Activated CD8-positive, alpha-beta memory T cell treated with anti-CD3 and anti-CD28 coated beads, Interleukin-2, amount 10 ng/mL, durations not matched to agents 7 days and 5 days (primary cell): ENCODE measurements at regions of chr15 and their contacts with region 1.

Region 1: GRCh38 chr15:41811432-41812195 is 16.3 kb upstream of the JMJD7 start:
- DNase-seq: peak; percentile 83
- ATAC-seq: peak; percentile 91
- H3K4me3 Mint-ChIP-seq: no peak overlapping the region
- H3K27ac Mint-ChIP-seq: peak overlapping the region; percentile 56
- H3K4me1 Mint-ChIP-seq: peaks cover 25% of the 10 kb centered on the region
- H3K27me3 Mint-ChIP-seq: no peaks in the 10 kb centered on the region

Region 2: DNA sequence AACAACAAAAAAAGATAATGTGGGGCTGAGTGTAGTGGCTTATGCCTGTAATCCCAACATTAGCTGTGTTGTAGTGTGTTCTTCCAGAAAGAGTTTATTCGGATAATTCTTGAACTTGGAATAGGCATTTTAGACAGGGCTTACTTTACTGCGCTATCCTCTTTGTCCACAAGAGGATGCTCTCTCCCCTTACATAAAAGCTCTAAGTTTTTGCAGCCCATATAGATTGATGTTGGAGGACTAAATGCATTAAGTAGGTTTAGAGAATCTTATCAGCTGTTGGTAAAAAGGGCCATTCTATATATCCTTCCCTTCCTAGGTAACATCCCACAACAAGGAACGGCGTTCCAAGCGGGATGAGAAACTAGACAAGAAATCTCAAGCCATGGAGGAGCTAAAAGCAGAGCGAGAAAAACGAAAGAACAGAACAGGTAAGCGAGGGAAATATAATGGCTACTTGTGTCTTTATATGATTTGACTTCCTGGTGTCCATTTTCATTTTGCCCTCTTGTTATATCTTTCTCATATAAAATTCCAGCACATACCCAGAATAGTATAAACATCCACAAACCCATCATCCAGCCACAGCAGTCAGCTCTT is 345.7 kb before region 1 on chr15:
- CTCF ChIA-PET with region 1: interaction called, 16 read pairs
- DNase-seq: no peak
- ATAC-seq: peak; percentile 39
- H3K4me3 Mint-ChIP-seq: no peak overlapping the region
- H3K27ac Mint-ChIP-seq: no peak overlapping the region
- H3K4me1 Mint-ChIP-seq: peaks cover 12% of the 10 kb centered on the region
- H3K27me3 Mint-ChIP-seq: no peaks in the 10 kb centered on the region

Region 3: GRCh38 chr15:41695750-41696426 is 115.7 kb before region 1 on chr15:
- CTCF ChIA-PET with region 1: interaction called, 18 read pairs
- DNase-seq: peak; percentile 80
- ATAC-seq: peak; percentile 98
- H3K4me3 Mint-ChIP-seq: peak overlapping the region; percentile 12
- H3K27ac Mint-ChIP-seq: peak overlapping the region; percentile 78
- H3K4me1 Mint-ChIP-seq: peaks cover 38% of the 10 kb centered on the region
- H3K27me3 Mint-ChIP-seq: no peaks in the 10 kb centered on the region

Region 4: GRCh38 chr15:41790756-41791546 is 20.7 kb before region 1 on chr15:
- CTCF ChIA-PET with region 1: interaction called, 47 read pairs
- DNase-seq: no peak
- ATAC-seq: peak; percentile 79
- H3K4me3 Mint-ChIP-seq: peak overlapping the region; percentile 18
- H3K27ac Mint-ChIP-seq: peak overlapping the region; percentile 71
- H3K4me1 Mint-ChIP-seq: peaks cover 34% of the 10 kb centered on the region
- H3K27me3 Mint-ChIP-seq: no peaks in the 10 kb centered on the region

Region 5: DNA sequence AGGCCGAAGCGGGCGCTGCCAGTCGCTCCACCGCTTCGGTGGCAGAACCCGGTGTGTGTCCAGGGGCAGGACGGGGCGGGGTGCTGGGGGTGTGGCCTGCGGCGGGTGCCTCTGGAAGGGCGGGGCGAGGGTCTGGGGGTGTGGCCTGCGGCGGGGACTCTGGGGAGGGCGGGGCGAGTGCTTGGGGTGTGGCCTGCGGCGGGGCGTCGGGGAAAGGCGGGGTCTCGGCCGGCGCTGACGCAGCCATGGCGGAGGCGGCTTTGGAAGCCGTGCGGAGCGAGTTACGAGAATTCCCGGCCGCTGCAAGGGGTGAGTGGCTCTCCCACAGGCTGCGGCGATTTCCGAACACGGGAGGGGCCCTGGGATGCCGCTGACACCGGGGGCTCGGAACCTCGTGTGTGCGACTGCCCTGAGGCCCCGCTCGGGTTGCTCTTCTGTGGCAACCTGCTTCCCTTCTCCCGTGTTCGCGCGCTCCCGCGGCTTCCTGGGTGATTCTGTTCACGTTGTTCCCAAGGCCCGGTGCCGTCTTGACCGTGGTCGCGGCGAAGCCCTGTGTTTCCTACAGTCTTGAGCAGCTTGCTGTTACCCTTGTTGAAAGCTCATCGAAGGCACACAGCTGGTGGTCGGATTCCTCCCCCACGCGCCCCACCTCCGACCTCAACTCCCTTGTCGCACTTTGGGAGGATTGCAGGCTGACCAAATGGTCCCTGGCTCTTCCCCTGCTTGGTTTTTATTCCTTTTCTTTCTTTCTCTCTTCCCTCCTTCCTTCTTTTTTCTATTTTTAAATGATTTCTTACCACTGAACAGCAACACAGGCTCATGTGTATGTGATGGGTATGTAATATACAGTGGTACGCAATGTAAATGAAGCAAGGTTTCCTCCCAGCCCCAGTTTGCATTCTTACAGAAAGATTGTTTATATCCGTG is 16.5 kb after region 1 on chr15 and contains the start of gene JMJD7:
- CTCF ChIA-PET with region 1: interaction called, 16 read pairs
- DNase-seq: peak; percentile 95
- ATAC-seq: peak; percentile 90
- H3K4me3 Mint-ChIP-seq: peak within 1 kb of the TSS; percentile 81
- H3K27ac Mint-ChIP-seq: peak within 1 kb of the TSS; percentile 71
- H3K4me1 Mint-ChIP-seq: peaks cover 41% of the 10 kb centered on the region
- H3K27me3 Mint-ChIP-seq: peaks cover 2% of the 10 kb centered on the region
- total RNA-seq, gene JMJD7: 12.0 to 21.9 TPM

Region 6: DNA sequence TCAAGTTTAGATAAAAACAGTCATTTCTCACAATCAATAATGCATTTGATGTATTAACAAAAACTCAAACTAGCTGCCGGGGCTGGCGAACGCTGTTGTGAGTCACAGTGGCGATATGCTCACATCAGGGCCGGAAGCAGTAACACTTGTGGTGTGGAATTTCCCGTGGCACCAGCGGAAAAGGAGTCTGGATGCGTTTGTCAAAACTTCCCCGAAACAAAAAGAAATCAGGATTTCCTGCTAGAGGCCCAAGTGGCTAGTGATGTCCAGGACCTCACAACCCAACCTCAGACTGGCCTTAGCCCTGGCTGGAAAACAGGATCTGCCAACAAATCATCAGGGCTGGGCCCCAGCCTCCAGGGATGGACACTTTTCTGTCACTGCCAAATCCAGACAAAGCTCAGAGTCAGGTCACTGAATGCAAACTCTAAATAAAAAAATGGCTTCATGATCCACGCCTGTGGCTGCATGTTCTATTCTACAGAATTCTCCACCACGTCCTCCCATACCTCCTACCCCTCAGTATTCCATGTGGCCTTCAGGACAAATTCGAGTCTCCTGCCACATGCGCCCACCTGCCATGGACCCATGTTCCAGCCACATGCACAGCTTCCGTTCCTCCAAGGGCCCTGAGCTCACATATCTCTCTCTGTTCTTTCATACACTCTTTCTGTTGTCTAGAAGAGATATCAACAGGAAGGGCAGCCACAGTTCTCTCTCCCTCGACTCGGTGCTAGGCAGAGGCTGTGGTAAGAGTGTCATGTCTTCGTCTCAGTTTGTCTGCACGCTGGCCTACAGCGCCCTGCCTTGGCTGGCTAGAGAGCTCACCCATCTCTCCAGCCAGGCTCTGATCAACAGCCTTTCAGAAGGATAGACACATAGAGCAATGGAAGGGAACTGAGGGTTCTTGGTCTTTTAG is 125.3 kb after region 1 on chr15:
- CTCF ChIA-PET with region 1: interaction called, 22 read pairs
- DNase-seq: peak; percentile 89
- ATAC-seq: peak; percentile 82
- H3K4me3 Mint-ChIP-seq: peak overlapping the region; percentile 52
- H3K27ac Mint-ChIP-seq: peak overlapping the region; percentile 100
- H3K4me1 Mint-ChIP-seq: peaks cover 71% of the 10 kb centered on the region
- H3K27me3 Mint-ChIP-seq: no peaks in the 10 kb centered on the region